Mammary epithelial cell (primary cell): ENCODE measurements at regions of chr5 and their contacts with region 1.

Region 1: GRCh38 chr5:170534177-170534576 is 30.4 kb downstream of the KCNIP1 start:
- DNase-seq: no peak
- H3K4me3 ChIP-seq: no peak overlapping the region
- H3K27ac ChIP-seq: no peak overlapping the region
- H3K4me1 ChIP-seq: no peaks in the 10 kb centered on the region
- H3K27me3 ChIP-seq: no peaks in the 10 kb centered on the region
- CTCF ChIP-seq: no peak

Region 2: DNA sequence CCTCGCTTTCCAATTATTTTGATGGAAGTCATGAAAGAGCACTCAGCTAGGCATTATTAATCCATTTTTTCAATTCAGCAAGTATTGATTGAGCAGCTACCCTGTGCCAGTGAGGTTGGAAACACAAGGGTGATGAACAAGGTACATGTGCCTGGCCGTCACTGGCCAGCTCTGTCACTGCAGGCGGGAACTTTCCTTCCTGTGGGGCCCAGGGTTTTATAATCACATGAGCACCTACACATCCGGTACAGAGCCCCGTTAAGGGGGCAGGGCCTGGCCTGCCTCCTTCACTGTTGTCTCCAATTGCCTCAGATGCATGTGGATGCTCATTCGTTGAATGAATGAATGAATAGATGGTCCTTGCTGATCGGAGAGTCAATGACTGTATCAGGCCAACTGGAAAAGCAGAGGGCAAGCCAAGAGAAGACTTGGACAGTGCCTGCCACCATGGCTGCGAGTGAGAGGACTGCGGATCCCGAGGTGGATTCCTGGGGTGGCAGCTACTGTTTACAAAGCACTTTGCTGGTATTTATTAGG is 89.1 kb before region 1 on chr5:
- CTCF ChIA-PET with region 1: no interaction called
- dilution Hi-C with region 1: loop called (anchors 5 kb)
- in situ Hi-C with region 1: no loop called
- intact Hi-C with region 1: loop called (anchors 10 kb)
- DNase-seq: no peak
- H3K4me3 ChIP-seq: no peak overlapping the region
- H3K27ac ChIP-seq: no peak overlapping the region
- H3K4me1 ChIP-seq: no peaks in the 10 kb centered on the region
- H3K27me3 ChIP-seq: no peaks in the 10 kb centered on the region
- CTCF ChIP-seq: no peak

Region 3: GRCh38 chr5:170491479-170491878 is 42.7 kb before region 1 on chr5:
- CTCF ChIA-PET with region 1: no interaction called
- dilution Hi-C with region 1: loop called (anchors 5 kb)
- in situ Hi-C with region 1: no loop called
- intact Hi-C with region 1: no loop called
- DNase-seq: peak; percentile 68
- H3K4me3 ChIP-seq: no peak overlapping the region
- H3K27ac ChIP-seq: no peak overlapping the region
- H3K4me1 ChIP-seq: peaks cover 8% of the 10 kb centered on the region
- H3K27me3 ChIP-seq: no peaks in the 10 kb centered on the region
- CTCF ChIP-seq: no peak

Region 4: GRCh38 chr5:170722316-170722715 is 188.1 kb after region 1 on chr5:
- CTCF ChIA-PET with region 1: no interaction called
- dilution Hi-C with region 1: no loop called
- in situ Hi-C with region 1: no loop called
- intact Hi-C with region 1: no loop called
- DNase-seq: no peak
- H3K4me3 ChIP-seq: no peak overlapping the region
- H3K27ac ChIP-seq: no peak overlapping the region
- H3K4me1 ChIP-seq: no peaks in the 10 kb centered on the region
- H3K27me3 ChIP-seq: no peaks in the 10 kb centered on the region
- CTCF ChIP-seq: no peak